ENCODE measurements at regions of chr1 and their contacts with region 1.

Region 1: GRCh38 chr1:178300352-178300699 is 196.4 kb downstream of the CLEC20A start:
- DNase-seq: no peak
- ATAC-seq: no peak
- H3K4me3 Mint-ChIP-seq: no peak overlapping the region
- H3K27ac Mint-ChIP-seq: no peak overlapping the region
- H3K4me1 Mint-ChIP-seq: no peaks in the 10 kb centered on the region
- H3K27me3 Mint-ChIP-seq: no peaks in the 10 kb centered on the region

Region 2: GRCh38 chr1:178224358-178224757 is 76.0 kb before region 1 on chr1:
- CTCF ChIA-PET with region 1: no interaction called
- POLR2A ChIA-PET with region 1: no interaction called
- DNase-seq: no peak
- ATAC-seq: no peak
- H3K4me3 Mint-ChIP-seq: no peak overlapping the region
- H3K27ac Mint-ChIP-seq: no peak overlapping the region
- H3K4me1 Mint-ChIP-seq: no peaks in the 10 kb centered on the region
- H3K27me3 Mint-ChIP-seq: no peaks in the 10 kb centered on the region

Region 3: DNA sequence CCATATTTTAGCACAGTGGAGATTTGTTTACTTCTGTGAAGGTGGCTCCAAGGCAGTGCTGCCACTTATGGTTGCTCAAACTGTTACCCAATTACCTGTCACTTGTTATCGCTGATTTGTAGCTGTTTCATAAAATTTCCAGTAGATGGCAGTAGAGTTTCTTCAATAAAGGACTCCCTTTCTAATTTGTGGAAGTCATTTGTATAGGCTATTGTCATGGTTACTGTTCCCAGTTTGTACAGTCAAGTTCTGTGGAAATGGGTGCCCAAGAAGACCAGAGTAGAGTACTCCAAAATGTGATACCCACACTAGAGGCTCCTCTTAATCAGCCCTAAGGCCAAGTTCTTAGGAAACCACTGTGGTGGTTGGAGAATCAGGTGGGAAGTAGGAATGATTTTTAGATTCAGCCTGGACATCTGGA is 10.4 kb after region 1 on chr1:
- CTCF ChIA-PET with region 1: interaction called, 46 read pairs
- POLR2A ChIA-PET with region 1: no interaction called
- DNase-seq: no peak
- ATAC-seq: peak; percentile 44
- H3K4me3 Mint-ChIP-seq: no peak overlapping the region
- H3K27ac Mint-ChIP-seq: no peak overlapping the region
- H3K4me1 Mint-ChIP-seq: no peaks in the 10 kb centered on the region
- H3K27me3 Mint-ChIP-seq: peaks cover 3% of the 10 kb centered on the region

Region 4: GRCh38 chr1:178501705-178502329 is 201.5 kb after region 1 on chr1:
- CTCF ChIA-PET with region 1: interaction called, 11 read pairs
- POLR2A ChIA-PET with region 1: no interaction called
- DNase-seq: peak; percentile 69
- ATAC-seq: peak; percentile 83
- H3K4me3 Mint-ChIP-seq: no peak overlapping the region
- H3K27ac Mint-ChIP-seq: no peak overlapping the region
- H3K4me1 Mint-ChIP-seq: no peaks in the 10 kb centered on the region
- H3K27me3 Mint-ChIP-seq: no peaks in the 10 kb centered on the region

Measured in activated CD8-positive, alpha-beta T cell treated with anti-CD3 and anti-CD28 coated beads, Interleukin-2, amount 10 ng/mL, durations not matched to agents 7 days and 5 days (primary cell).